ENCODE measurements at regions of chr18 and their contacts with region 1.

Region 1: DNA sequence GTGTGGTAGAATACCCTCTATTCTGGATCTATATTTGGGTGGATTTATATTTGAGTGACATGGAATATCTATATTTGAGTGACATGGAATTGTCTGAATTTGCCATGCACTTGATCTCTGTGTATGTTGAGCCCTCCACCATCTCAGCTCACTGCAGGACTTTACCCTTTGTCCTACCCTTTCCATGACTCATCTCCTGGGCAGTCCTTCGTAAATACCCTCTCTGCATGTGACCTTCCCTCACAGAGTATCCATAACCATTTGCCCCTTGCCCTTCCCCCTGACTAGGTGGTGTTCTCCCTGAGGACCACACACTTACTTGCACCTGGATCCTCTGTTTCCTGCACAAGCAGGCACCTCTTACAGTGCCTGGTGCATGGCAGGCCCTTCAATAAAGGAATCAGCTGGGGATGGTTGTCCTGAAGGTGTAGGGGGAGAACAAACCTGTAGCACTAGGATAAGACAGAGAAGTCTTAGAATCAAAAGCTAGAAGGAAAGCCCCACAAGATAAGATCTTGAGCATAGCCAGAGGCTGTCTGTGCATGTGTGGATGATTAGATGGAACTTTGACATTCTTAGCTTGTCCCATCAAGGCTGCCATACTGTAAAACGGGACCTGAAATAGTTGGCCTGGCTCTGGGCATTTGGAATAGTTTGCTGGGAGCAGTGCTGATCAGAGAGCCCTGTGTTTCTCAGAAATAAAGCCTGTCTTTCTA is 230.4 kb downstream of the FHOD3 start:
- DNase-seq: no peak

Region 2: DNA sequence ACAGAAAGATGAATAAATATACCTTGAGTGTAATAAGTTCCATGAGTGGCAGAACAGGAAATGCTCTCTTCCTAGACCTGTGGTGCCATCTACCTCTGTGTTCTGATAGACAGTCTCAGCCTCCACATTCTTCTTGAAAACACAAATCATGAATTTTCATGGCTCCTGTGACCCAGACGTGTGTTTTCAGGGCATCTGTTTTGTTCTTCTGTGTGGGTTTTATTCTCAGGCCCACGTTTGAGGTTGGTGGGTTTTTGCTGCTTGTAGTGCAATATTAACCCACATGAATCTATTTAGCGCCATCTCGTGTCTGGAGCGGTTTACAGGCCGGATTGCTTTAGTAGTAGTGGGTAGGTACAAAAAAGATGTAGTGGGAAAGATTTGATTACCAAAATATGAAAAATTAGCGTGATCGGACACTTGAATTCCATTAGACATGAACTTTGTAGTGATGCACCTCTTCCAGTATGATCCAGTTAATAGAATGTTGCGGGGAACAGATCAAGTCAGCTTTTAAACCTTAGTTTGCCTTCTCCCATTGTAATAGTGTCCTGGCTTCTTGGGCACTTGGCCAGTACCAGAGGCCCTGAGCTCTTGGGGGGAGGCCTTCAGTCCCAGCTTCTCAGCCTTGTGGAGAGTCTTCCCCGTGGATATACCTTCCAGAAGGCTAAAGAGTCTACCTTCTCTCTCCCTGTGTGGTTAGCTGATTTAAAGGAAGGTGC is 44.4 kb after region 1 on chr18:
- intact Hi-C with region 1: loop called (anchors 5 kb)
- DNase-seq: no peak

Region 3: DNA sequence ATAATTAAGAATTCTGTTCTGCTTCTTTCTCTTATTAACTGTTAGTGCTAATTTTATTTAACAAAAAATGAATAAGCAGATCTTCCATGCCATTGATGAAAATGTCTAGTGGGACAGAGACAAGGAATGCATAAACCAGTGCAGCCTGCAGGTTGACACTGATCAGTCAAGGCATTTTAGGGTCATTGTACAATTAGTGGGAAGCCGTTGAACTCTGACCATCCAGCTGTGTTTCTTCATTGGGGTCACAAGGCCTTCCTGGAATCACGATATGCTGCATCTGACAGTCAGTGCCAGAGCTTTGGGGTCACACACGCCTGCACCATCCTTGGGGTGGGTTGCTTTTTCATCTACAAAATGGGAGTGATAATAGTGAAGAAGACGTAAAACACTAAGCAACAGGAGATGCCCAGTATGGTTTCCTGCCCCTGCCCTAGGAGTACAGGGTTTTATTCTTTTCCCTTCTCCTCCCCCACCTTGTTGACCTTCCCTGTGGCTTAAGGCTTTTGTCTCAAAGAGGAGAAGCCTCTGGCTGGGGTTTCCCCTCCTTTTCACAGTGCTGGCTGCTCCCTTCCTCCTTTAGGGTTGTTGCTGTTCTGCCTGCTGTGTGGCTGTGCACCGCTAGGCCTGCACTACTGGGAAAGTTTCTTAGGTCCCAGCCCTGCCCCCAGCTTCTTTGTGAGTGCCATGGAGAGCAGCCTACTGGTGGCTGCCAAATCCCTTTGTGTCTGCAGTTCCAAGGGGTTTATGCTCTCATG is 55.3 kb after region 1 on chr18:
- intact Hi-C with region 1: no loop called
- DNase-seq: no peak